ENCODE measurements at regions of chr16 and their contacts with region 1.

Region 1: GRCh38 chr16:59840169-59840568 is 1106.1 kb upstream of the GOT2 start:
- DNase-seq: no peak
- ATAC-seq: no peak
- H3K4me3 ChIP-seq: no peak overlapping the region
- H3K4me3 Mint-ChIP-seq: no peak overlapping the region
- H3K27ac ChIP-seq: no peak overlapping the region
- H3K27ac Mint-ChIP-seq: no peak overlapping the region
- H3K4me1 ChIP-seq: no peaks in the 10 kb centered on the region
- H3K4me1 Mint-ChIP-seq: no peaks in the 10 kb centered on the region
- H3K27me3 ChIP-seq: no peaks in the 10 kb centered on the region
- H3K27me3 Mint-ChIP-seq: no peaks in the 10 kb centered on the region

Region 2: DNA sequence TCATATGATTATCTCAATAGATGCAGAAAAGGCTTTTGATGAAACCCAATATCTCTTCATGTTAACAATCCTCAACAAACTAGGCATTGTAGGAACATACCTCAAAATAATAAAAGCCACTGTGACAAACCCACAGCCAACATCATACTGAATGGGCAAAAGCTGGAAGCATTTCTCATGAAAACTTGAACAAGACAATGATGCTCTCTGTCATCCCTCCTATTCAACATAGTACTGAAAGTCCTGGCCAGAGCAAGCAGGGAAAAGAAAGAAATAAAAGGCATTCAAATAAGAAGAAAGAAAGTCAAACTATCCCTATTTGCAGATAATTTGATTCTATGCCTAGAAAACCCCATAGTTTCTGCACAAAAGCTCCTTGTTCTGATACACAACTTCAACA is 106.8 kb before region 1 on chr16:
- CTCF ChIA-PET with region 1: no interaction called
- POLR2A ChIA-PET with region 1: no interaction called
- intact Hi-C with region 1: no loop called
- DNase-seq: no peak
- ATAC-seq: no peak
- H3K4me3 ChIP-seq: no peak overlapping the region
- H3K4me3 Mint-ChIP-seq: no peak overlapping the region
- H3K27ac ChIP-seq: no peak overlapping the region
- H3K27ac Mint-ChIP-seq: no peak overlapping the region
- H3K4me1 ChIP-seq: no peaks in the 10 kb centered on the region
- H3K4me1 Mint-ChIP-seq: no peaks in the 10 kb centered on the region
- H3K27me3 ChIP-seq: no peaks in the 10 kb centered on the region
- H3K27me3 Mint-ChIP-seq: peaks cover 0 to 3% (median 0%) of the 10 kb centered on the region in 5 donors

Region 3: DNA sequence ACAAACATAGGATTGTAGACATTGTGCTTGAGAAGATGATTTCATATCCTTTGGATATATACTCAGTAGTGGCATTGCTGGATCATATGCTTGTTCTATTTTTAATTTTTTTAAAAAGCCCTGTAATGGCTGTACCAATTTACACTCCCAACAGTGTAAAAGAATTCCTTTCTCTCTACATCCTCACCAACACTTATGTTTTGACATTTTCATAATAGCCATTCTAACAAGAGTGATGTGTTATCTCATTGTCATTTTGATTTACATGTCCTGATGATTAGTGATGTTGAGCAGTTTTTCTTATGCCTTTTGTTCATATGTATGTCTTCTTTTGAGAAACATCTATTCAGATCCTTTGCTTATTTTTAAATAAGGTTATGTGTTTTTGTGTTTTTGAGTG is 66.8 kb before region 1 on chr16:
- CTCF ChIA-PET with region 1: no interaction called
- POLR2A ChIA-PET with region 1: no interaction called
- intact Hi-C with region 1: no loop called
- DNase-seq: no peak
- ATAC-seq: no peak
- H3K4me3 ChIP-seq: no peak overlapping the region
- H3K4me3 Mint-ChIP-seq: no peak overlapping the region
- H3K27ac ChIP-seq: no peak overlapping the region
- H3K27ac Mint-ChIP-seq: no peak overlapping the region
- H3K4me1 ChIP-seq: no peaks in the 10 kb centered on the region
- H3K4me1 Mint-ChIP-seq: no peaks in the 10 kb centered on the region
- H3K27me3 ChIP-seq: no peaks in the 10 kb centered on the region
- H3K27me3 Mint-ChIP-seq: no peaks in the 10 kb centered on the region

Region 4: GRCh38 chr16:59854846-59855439 is 14.8 kb after region 1 on chr16:
- CTCF ChIA-PET with region 1: no interaction called
- POLR2A ChIA-PET with region 1: no interaction called
- intact Hi-C with region 1: loop called in 1 of 2 experiments (anchors 1 kb)
- DNase-seq: no peak
- ATAC-seq: no peak
- H3K4me3 ChIP-seq: no peak overlapping the region
- H3K4me3 Mint-ChIP-seq: no peak overlapping the region
- H3K27ac ChIP-seq: no peak overlapping the region
- H3K27ac Mint-ChIP-seq: no peak overlapping the region
- H3K4me1 ChIP-seq: no peaks in the 10 kb centered on the region
- H3K4me1 Mint-ChIP-seq: no peaks in the 10 kb centered on the region
- H3K27me3 ChIP-seq: no peaks in the 10 kb centered on the region
- H3K27me3 Mint-ChIP-seq: no peaks in the 10 kb centered on the region